ENCODE measurements at regions of chr7 and their contacts with region 1.

Region 1: DNA sequence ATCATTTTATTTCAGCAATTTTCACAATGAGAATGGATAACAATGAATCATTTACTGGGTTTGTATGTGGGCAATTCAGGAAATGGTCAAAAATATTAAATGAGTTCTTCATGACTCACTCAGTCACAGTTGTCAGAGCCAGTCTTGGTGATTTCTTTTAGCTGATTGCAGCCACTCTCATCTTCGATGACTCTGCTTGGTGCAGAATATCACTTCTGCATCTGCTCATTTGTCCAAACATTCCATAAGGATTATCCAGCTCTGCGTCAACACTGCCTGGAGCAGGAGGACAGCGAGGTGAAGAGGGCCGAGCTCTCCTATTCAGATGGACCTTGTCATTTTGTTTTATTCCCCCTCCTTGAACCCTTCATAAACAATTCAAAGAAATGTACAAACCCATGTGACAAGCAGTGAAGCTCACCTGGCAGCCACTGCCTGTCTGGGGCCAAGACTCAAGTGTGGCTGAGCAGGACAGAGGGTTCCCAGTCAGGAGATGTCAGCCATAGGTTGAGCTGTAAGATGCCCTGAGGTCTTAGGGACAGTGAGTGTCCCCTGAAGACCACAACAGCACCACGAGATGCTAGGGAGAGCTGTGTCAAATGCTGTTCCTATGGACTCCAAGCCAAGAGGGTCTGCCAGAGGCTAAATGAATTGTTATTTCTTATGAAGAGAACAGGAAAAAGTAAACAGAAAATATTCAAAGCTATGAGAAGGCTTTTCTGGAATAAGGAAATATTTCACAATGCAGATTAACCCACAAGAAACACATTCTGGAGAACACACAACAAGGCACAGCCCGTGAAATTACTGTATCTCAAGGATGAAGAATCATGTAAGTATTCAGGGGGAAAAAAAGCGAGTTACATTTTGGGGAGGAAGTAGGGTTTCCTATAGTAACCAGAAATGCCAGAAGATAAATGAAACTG is 33.1 kb upstream of the EGFR start:
- DNase-seq: peak; percentile 75 to 100
- H3K4me3 ChIP-seq: peak overlapping the region; percentile 38; the same call in 1 of the 2 replicates
- H3K27ac ChIP-seq: peak overlapping the region; percentile 89
- H3K4me1 ChIP-seq: peaks cover 51% of the 10 kb centered on the region
- H3K27me3 ChIP-seq: no peaks in the 10 kb centered on the region
- CTCF ChIP-seq: no peak

Region 2: GRCh38 chr7:54961391-54961790 is 24.3 kb before region 1 on chr7:
- CTCF ChIA-PET with region 1: interaction called, 11 read pairs
- POLR2A ChIA-PET with region 1: interaction called, 7 read pairs
- intact Hi-C with region 1: no loop called
- DNase-seq: peak; percentile 88 to 98
- H3K4me3 ChIP-seq: peak overlapping the region; percentile 12; the same call in 1 of the 2 replicates
- H3K27ac ChIP-seq: peak overlapping the region; percentile 71
- H3K4me1 ChIP-seq: peaks cover 34% of the 10 kb centered on the region
- H3K27me3 ChIP-seq: no peaks in the 10 kb centered on the region
- CTCF ChIP-seq: no peak

Region 3: DNA sequence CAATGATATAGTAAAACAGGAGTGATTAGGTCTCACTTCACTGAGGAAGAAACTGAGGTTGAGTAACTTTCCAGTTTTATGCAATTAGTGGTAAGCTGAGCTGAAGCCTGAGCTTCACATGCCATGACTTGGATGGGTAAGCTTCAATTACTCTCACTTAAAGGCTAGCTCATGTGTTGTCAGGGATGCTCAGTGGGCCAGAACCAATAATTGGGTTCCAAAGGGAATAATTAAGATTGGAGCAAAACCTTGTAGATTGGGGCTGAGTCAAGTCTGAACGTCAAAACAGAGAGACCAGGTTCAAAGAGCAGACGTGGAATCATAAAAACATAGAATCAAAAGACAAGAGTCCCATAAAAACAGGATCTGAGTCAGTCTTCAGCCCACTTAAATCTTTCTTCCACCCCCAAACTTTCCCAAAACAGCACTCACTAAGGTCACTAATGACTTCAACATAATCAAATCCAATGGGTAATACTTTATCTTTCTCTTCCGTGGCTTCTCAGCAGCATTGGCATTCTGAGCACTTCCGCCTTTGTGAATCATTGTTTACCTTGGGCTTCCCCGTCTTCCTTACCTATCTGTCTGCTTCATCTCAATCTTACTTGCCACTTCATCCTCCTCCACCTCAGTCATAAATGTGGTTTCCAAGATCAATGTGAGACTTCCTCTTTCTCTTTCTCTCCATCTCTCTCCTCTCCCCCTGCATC is 10.1 kb after region 1 on chr7:
- CTCF ChIA-PET with region 1: interaction called, 3 read pairs
- POLR2A ChIA-PET with region 1: no interaction called
- intact Hi-C with region 1: loop called (anchors 1 kb)
- DNase-seq: peak; percentile 71 to 99
- H3K4me3 ChIP-seq: peak overlapping the region; percentile 13
- H3K27ac ChIP-seq: peak overlapping the region; percentile 89
- H3K4me1 ChIP-seq: peaks cover 56% of the 10 kb centered on the region
- H3K27me3 ChIP-seq: no peaks in the 10 kb centered on the region
- CTCF ChIP-seq: peak; percentile 9; the same call in 1 of the 2 replicates

Region 4: DNA sequence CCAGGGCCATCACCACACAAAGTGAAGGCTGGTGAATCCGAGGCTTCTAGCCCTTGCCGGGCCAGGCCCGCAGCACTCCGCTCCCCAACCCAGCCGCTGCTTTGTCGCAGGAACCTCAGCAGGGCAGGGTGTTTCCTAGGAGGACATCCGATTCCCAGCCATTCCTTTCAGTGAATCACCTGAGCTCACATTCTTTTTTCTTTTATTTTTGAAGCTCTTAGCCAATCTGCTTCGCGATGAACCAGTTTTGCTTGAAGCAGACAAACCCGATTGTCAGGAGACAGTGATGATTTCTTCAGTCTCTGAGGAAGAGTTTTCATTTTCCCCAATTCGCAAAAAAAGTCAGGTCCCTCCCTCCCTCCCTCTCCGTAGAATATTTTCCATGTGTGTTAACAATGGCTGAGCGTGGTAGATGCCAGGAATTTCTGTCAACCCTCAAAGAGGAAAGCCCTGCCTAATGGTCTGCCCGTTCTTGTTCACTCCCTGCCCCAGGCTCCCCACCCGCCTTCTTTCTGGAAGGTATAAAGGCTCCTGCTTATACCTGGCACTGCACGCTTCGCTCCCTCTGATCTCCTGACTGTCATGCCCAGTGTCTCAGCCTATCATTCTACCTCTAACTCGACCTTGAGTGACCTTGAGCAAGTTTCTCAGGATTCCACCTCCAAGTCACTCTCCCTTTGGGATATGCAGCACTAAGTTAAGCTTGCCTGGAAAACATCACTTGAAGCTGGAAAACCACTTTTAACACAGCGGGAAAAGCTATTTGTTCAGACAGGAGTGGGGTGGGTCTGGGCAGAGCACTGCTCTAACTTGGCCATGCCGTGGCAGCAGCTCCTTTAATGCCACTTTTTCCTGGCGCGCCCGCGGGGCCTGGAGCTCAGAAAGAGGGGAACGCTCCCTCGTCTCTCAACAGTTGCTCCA is 68.2 kb after region 1 on chr7:
- CTCF ChIA-PET with region 1: interaction called, 3 read pairs
- POLR2A ChIA-PET with region 1: no interaction called
- intact Hi-C with region 1: loop called (anchors 1 kb)
- DNase-seq: peak; percentile 90 to 98
- H3K4me3 ChIP-seq: peak overlapping the region; percentile 2; the same call in 1 of the 2 replicates
- H3K27ac ChIP-seq: peak overlapping the region; percentile 82
- H3K4me1 ChIP-seq: peaks cover 72% of the 10 kb centered on the region
- H3K27me3 ChIP-seq: no peaks in the 10 kb centered on the region
- CTCF ChIP-seq: no peak